AG04450 (cell line): ENCODE measurements at regions of chr20 and their contacts with region 1.

Region 1: GRCh38 chr20:62010551-62011402 is 54.9 kb downstream of the TAF4 start:
- DNase-seq: peak; percentile 20
- H3K4me3 ChIP-seq: no peak overlapping the region
- H3K27ac ChIP-seq: no peak overlapping the region
- H3K27me3 ChIP-seq: no peaks in the 10 kb centered on the region
- CTCF ChIP-seq: peak; percentile 78

Region 2: GRCh38 chr20:62025832-62026563 is 15.2 kb after region 1 on chr20:
- CTCF ChIA-PET with region 1: interaction called, 14 read pairs
- POLR2A ChIA-PET with region 1: no interaction called
- DNase-seq: peak; percentile 20
- H3K4me3 ChIP-seq: no peak overlapping the region
- H3K27ac ChIP-seq: no peak overlapping the region
- H3K27me3 ChIP-seq: no peaks in the 10 kb centered on the region
- CTCF ChIP-seq: peak; percentile 78

Region 3: GRCh38 chr20:62129731-62130531 is 119.2 kb after region 1 on chr20:
- CTCF ChIA-PET with region 1: interaction called, 55 read pairs
- POLR2A ChIA-PET with region 1: no interaction called
- DNase-seq: no peak
- H3K4me3 ChIP-seq: no peak overlapping the region
- H3K27ac ChIP-seq: no peak overlapping the region
- H3K27me3 ChIP-seq: no peaks in the 10 kb centered on the region
- CTCF ChIP-seq: no peak

Region 4: GRCh38 chr20:62136283-62137091 is 125.7 kb after region 1 on chr20:
- CTCF ChIA-PET with region 1: interaction called, 55 read pairs
- POLR2A ChIA-PET with region 1: interaction called, 4 read pairs
- DNase-seq: no peak
- H3K4me3 ChIP-seq: no peak overlapping the region
- H3K27ac ChIP-seq: no peak overlapping the region
- H3K27me3 ChIP-seq: no peaks in the 10 kb centered on the region
- CTCF ChIP-seq: peak; percentile 90

Region 5: GRCh38 chr20:62142245-62143117 is 131.7 kb after region 1 on chr20:
- CTCF ChIA-PET with region 1: interaction called, 55 read pairs
- POLR2A ChIA-PET with region 1: interaction called, 4 read pairs
- DNase-seq: no peak
- H3K4me3 ChIP-seq: peak overlapping the region; percentile 69
- H3K27ac ChIP-seq: no peak overlapping the region
- H3K27me3 ChIP-seq: no peaks in the 10 kb centered on the region
- CTCF ChIP-seq: no peak

Region 6: GRCh38 chr20:62156592-62157386 is 146.0 kb after region 1 on chr20:
- CTCF ChIA-PET with region 1: interaction called, 14 read pairs
- POLR2A ChIA-PET with region 1: no interaction called
- DNase-seq: no peak
- H3K4me3 ChIP-seq: no peak overlapping the region
- H3K27ac ChIP-seq: peak overlapping the region; percentile 11
- H3K27me3 ChIP-seq: no peaks in the 10 kb centered on the region
- CTCF ChIP-seq: peak; percentile 66